ENCODE measurements at regions of chr12 and their contacts with region 1.

Region 1: GRCh38 chr12:101407436-101408345 is at the start of gene ARL1:
- DNase-seq: peak; percentile 29 to 89
- H3K4me3 ChIP-seq: peak within 1 kb of the TSS; percentile 89 to 92
- H3K27ac ChIP-seq: peak within 1 kb of the TSS; percentile 89 to 94
- H3K4me1 ChIP-seq: peaks cover 0 to 3% of the 10 kb centered on the region in 2 donors
- H3K27me3 ChIP-seq: no peaks in the 10 kb centered on the region
- CTCF ChIP-seq: no peak
- total RNA-seq, gene ARL1: 16.0 TPM

Region 2: GRCh38 chr12:101356794-101357193 is 50.9 kb before region 1 on chr12:
- intact Hi-C with region 1: no loop called
- DNase-seq: no peak
- H3K4me3 ChIP-seq: no peak overlapping the region
- H3K27ac ChIP-seq: no peak overlapping the region
- H3K4me1 ChIP-seq: no peaks in the 10 kb centered on the region
- H3K27me3 ChIP-seq: no peaks in the 10 kb centered on the region
- CTCF ChIP-seq: no peak

Region 3: DNA sequence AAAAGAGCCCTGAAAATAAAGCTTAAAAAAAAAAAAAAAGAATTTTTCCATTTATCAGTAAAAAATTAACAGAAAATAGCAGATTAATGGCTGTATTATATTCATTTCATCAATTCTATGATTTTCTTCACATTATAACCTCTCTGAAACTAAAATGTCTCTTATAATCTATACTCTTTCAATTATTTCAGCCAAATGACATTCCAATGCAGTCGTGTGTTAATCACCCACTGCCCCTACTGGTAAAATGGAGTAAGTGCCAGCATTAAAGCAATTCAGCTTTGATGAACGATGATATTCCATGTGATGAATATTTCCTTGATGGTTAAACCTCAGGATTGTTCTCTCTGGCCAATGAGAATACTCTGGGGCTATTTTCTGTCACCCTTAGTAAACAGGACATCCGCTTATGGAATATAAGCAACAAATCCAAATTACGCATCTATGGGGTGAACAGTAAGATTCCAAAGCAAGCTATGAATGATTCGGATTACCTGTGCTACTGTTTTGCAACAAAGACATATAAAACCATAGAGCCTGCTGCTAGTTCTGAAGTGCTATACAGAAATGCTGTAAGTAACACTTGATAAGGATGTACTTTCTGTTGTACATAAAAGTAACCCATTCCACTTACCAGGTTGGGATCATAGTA is 351.8 kb after region 1 on chr12:
- intact Hi-C with region 1: loop called (anchors 5 kb)
- DNase-seq: no peak
- H3K4me3 ChIP-seq: no peak overlapping the region
- H3K27ac ChIP-seq: no peak overlapping the region
- H3K4me1 ChIP-seq: no peaks in the 10 kb centered on the region
- H3K27me3 ChIP-seq: no peaks in the 10 kb centered on the region
- CTCF ChIP-seq: peak; percentile 14 to 61 (median 60)